Body of pancreas (tissue), 4 donors: ENCODE measurements at regions of chr9 and their contacts with region 1.

Region 1: GRCh38 chr9:127406799-127407509 is 10.0 kb downstream of the SLC2A8 start:
- DNase-seq: no peak
- ATAC-seq: no peak
- H3K4me3 ChIP-seq: no peak overlapping the region
- H3K27ac ChIP-seq: no peak overlapping the region
- H3K4me1 ChIP-seq: no peaks in the 10 kb centered on the region
- H3K27me3 ChIP-seq: no peaks in the 10 kb centered on the region
- CTCF ChIP-seq: no peak
- POLR2A ChIP-seq: no peak

Region 2: DNA sequence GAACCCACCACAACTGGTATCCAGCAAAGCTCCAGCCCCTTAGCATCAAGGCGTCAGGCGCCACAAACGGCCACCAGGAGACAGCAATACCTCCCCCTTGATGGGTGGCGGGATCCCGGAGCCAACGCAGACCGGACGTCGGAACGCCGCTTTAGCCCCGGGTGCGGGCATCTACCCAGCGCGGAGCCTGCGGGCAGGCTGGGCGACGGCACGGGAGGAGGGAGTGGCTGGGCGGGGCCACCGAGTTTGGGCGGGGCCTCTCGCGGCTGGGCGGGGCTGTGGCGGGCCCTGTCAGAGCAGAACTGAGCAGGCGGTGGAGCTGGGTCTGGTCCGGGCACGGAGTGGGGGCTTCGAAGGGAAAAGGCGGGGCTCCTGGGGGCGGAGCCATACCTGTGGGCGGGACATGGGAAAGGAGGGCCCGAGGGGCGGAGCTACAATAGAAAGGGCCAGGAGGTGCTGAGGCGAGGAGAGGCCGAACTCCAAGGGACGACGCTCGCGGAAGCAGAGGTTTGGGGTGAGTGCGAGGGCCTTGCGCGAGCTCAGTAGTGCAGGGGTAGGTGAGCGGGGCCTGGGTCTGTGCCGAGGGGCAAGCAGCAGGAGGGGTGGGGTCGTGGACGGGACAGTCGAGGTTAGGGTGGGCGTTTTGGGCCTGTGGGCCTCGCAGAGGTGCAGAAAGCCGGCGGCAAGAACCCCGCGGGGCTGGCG is 182.6 kb before region 1 on chr9:
- intact Hi-C with region 1: loop called (anchors 10 kb)
- DNase-seq: peak; percentile 91 to 94 (median 92)
- ATAC-seq: peak; percentile 73
- H3K4me3 ChIP-seq: peak overlapping the region in 1 of 2 donors; percentile 13
- H3K27ac ChIP-seq: peak overlapping the region; percentile 55 to 79 (median 72)
- H3K4me1 ChIP-seq: peaks cover 16% of the 10 kb centered on the region
- H3K27me3 ChIP-seq: no peaks in the 10 kb centered on the region
- CTCF ChIP-seq: peak in 3 of 7 experiments; percentile 16 to 25 (median 24)
- POLR2A ChIP-seq: peak in 2 of 3 donors; percentile 58 to 65

Region 3: GRCh38 chr9:127734747-127735529 is 328.0 kb after region 1 on chr9 and contains the start of gene TOR2A:
- intact Hi-C with region 1: no loop called
- DNase-seq: peak; percentile 97 to 98 (median 98)
- ATAC-seq: peak; percentile 95
- H3K4me3 ChIP-seq: peak within 1 kb of the TSS; percentile 63 to 70
- H3K27ac ChIP-seq: peak within 1 kb of the TSS; percentile 81 to 99 (median 93)
- H3K4me1 ChIP-seq: peaks cover 7% of the 10 kb centered on the region
- H3K27me3 ChIP-seq: no peaks in the 10 kb centered on the region
- CTCF ChIP-seq: peak; percentile 92 to 99 (median 99)
- POLR2A ChIP-seq: peak; percentile 77 to 80 (median 77)
- total RNA-seq, gene TOR2A: 8.3 to 14.2 TPM